AG04449 (cell line): ENCODE measurements at regions of chr17 and their contacts with region 1.

Region 1: GRCh38 chr17:8091033-8091687 is 3.6 kb upstream of the ALOX12B start:
- DNase-seq: no peak
- H3K4me3 ChIP-seq: no peak overlapping the region
- CTCF ChIP-seq: no peak

Region 2: GRCh38 chr17:8073627-8074484 is 17.3 kb before region 1 on chr17:
- CTCF ChIA-PET with region 1: interaction called, 165 read pairs
- POLR2A ChIA-PET with region 1: interaction called, 3 read pairs
- DNase-seq: no peak
- H3K4me3 ChIP-seq: no peak overlapping the region
- CTCF ChIP-seq: peak; percentile 87

Region 3: DNA sequence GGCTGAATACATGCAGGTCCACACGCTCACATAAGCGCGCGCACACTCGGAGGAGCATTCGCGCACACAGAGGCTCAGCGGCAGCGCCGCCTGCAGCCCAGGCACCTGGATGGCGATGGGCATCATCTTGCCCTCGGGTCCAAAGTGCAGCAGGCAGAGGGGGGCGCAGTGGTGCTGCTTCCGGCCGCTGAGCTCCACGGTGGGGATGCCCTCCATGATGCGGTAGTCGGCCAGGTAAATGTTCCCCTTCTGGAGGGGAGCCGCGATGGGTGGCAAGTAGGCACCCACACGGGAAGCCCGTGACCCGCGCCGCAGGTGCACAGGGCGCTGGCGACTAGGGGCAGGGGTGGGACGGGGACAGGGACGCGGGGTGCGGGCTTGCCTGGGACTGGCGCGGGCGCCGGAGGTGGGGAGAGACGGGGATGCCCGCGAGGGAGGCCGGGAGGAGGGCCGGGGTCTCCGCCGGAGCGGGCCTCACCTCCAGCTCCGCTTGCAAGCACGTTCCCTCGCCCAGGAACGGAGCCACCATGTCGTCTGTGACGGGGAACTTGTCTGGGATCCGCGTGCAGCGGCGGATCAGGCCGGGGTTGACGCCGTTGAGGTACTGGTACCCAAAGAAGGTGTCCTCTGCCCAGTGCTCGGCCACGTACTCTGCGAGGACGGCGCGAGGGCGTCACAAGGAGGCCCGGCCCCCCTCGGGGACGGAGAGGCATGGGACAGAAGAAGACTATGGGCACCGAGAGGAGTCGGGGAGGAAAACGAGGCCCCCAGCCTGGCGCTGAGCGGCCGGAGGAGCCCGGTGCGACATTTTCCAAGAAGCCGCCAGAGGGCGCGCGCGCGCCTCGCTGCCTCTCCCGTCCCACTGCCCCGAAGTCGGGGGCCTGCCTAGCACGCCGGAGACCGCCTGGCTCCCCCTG is 11.6 kb before region 1 on chr17:
- CTCF ChIA-PET with region 1: interaction called, 165 read pairs
- POLR2A ChIA-PET with region 1: interaction called, 3 read pairs
- DNase-seq: no peak
- H3K4me3 ChIP-seq: peak overlapping the region; percentile 55
- CTCF ChIP-seq: peak; percentile 88

Region 4: GRCh38 chr17:8109661-8110464 is 18.7 kb after region 1 on chr17:
- CTCF ChIA-PET with region 1: interaction called, 244 read pairs
- POLR2A ChIA-PET with region 1: no interaction called
- DNase-seq: no peak
- H3K4me3 ChIP-seq: peak overlapping the region; percentile 8; the same call in 1 of the 2 replicates
- CTCF ChIP-seq: peak; percentile 79